BJ (cell line): ENCODE measurements at regions of chr16 and their contacts with region 1.

Region 1: DNA sequence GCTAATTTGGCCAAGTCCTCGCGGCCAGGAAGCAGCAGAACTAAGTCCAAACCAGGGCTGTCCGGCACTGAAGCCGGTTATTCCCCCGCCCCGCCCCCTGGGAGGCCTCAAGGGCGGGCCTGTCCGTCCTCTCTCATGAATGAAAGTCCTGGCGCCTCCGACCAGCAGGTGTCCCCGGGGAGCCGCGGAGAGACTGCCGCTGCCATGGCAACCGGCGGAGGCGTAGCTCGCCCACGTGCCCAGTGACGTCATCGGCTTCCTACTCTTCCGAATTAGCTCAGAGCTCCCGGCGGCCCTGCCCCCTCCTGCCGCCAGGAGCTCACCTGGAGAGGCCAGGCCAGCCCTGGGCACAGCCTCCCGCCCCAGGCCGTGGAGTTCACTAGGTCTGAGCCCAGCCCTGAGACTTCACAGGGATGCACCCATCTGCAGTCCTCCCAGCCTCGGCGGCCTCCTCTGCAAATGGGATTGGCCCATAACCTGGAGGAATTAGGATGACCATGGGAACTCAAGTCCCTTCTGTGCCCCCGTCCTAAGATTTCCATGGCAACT is 1.3 kb downstream of the SPATA2L start:
- DNase-seq: peak; percentile 81
- H3K4me3 ChIP-seq: peak overlapping the region; percentile 95
- H3K27me3 ChIP-seq: no peaks in the 10 kb centered on the region
- CTCF ChIP-seq: peak; percentile 82

Region 2: GRCh38 chr16:89795676-89796075 is 95.5 kb after region 1 on chr16:
- CTCF ChIA-PET with region 1: interaction called, 31 read pairs
- POLR2A ChIA-PET with region 1: no interaction called
- DNase-seq: no peak
- H3K4me3 ChIP-seq: no peak overlapping the region
- H3K27me3 ChIP-seq: no peaks in the 10 kb centered on the region
- CTCF ChIP-seq: no peak

Region 3: DNA sequence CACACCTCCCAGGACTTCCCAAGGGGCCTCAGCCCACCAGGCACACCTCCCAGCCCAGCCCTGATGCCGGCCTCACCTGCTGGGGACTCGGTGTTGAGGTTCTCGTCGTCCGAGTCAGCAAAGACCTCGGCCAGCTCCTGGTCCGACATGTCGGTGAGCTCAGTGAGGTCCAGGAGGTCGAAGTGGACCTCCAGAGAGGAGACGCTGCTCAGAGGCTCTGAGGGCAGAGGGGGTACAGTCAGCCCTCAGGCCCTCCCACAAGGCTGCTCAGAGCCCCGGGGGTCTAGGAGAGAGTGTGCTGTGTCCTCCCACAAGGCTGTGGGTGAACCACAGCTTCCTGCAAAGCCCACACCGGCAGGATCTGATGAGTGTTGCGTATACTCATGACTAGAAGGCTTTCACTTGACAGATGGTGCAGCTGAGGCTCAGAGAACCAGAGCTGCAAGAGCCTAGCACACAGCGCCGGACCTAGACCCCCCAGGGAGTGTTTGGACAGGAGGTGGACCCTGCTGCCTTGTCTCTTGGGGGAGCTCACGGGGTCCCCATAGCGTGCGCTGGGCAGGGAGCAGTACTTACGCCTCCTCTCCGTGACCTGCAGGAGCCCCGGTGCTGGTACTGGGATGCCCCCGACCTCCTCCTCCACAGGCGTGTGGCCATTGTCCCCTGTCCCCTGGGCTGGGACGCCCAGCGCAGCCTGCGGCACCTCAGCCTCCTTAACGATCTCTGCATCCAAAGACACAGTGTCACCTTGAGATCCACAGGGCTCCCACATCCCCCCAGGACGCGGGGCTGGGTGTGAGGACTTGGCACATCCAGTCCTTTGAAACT is 308.7 kb after region 1 on chr16:
- CTCF ChIA-PET with region 1: no interaction called
- POLR2A ChIA-PET with region 1: no interaction called
- DNase-seq: no peak
- H3K4me3 ChIP-seq: no peak overlapping the region
- H3K27me3 ChIP-seq: no peaks in the 10 kb centered on the region; the same call in 1 of the 2 replicates
- CTCF ChIP-seq: no peak